ENCODE measurements at regions of chr13 and their contacts with region 1.

Region 1: DNA sequence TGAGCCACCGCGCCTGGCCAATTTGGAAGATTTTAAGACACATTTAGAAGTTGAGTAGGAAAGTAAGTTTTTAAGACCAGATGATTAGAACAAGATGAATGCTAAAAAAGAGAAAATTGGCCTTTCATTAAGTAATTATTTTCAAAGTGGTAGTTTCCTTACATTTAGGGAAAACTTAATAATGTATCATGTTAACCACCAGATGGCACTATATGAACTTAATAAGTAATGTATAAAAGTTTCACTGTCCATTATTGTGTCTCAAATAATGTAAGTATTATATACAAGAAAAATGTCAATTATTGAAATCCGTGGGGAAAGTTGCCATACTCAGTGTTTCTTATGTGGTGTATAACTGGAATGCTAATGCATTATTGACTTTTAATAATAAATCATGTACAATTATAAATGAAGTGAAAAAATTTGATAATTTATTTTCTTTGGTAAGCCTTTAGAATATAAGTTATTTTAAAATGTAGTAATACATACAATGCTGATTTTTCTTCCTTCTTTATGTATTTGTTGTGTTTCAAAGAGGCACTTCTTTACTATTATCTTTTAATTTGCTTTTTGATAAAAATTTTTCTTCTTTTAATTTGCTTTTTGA is 29.2 kb downstream of the COG6 start:
- DNase-seq: peak; percentile 65
- ATAC-seq: peak; percentile 54
- H3K4me3 ChIP-seq: no peak overlapping the region
- H3K27ac ChIP-seq: no peak overlapping the region
- H3K4me1 ChIP-seq: peaks cover 3% of the 10 kb centered on the region; the same call in 1 of the 2 replicates
- H3K27me3 ChIP-seq: no peaks in the 10 kb centered on the region
- CTCF ChIP-seq: peak; percentile 49
- POLR2A ChIP-seq: no peak
- RAD21 ChIP-seq: peak; percentile 50

Region 2: DNA sequence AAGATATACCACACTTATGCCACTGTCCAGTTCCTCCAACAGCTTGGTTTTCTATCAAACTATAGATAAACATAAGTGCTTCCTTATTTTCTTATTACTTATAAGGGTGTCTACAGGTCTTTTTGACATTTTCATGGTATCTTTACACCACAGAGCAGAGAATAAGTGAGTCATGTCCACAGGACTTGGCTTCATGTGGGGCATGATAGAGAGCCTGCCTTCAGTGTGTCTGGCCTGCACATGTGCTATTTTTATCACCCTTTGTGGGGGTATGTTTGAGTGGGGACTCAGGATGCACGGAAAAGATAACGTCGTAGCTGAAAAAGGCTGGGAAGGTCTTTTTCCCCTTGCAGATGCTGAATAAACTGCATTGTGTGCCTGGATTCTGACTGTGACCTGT is 685.9 kb before region 1 on chr13:
- CTCF ChIA-PET with region 1: no interaction called
- POLR2A ChIA-PET with region 1: no interaction called
- dilution Hi-C with region 1: no loop called
- in situ Hi-C with region 1: no loop called
- intact Hi-C with region 1: no loop called
- DNase-seq: no peak
- ATAC-seq: no peak
- H3K4me3 ChIP-seq: no peak overlapping the region
- H3K27ac ChIP-seq: no peak overlapping the region
- H3K4me1 ChIP-seq: no peaks in the 10 kb centered on the region
- H3K27me3 ChIP-seq: no peaks in the 10 kb centered on the region
- CTCF ChIP-seq: no peak
- POLR2A ChIP-seq: no peak
- RAD21 ChIP-seq: no peak

Region 3: DNA sequence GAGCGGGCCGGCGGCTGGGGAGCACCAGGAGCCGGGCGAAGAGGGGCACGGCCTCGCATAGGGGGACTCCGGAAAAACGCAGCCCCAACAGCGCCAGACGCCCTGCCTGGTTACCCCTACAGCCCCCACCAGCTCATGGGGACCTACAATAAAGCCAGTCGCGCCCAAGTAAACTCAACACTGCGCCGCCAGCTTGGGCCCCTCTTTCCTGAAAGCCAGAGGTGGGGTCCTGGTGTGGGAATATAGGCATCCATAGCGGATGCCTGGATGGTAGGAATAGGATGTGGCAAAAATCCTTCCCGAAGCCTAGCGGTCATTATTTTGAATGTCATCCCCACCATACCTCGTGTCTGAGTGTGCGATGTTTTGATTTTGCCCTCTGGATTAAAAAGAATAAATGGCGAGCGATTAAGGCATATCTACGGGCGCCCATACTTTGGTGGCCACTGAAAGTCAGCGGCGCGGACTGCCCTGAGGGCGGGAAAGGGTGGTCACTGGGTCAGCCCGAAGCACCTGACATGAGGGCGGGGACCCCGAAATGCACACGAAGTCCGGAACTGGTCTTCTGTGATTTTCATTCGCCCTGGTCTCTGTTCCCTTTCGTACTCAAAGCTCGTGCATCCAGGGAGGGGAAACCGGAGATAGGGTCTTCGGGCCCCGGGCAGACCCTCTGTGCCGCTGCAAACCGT is 646.6 kb before region 1 on chr13 and contains the starts of genes NHLRC3 and PROSER1:
- CTCF ChIA-PET with region 1: interaction called, 3 read pairs
- POLR2A ChIA-PET with region 1: no interaction called
- dilution Hi-C with region 1: no loop called
- in situ Hi-C with region 1: no loop called
- intact Hi-C with region 1: loop called (anchors 5 kb)
- DNase-seq: peak; percentile 88
- ATAC-seq: peak; percentile 92
- H3K4me3 ChIP-seq: peak within 1 kb of the TSS; percentile 85
- H3K27ac ChIP-seq: peak within 1 kb of the TSS; percentile 77
- H3K4me1 ChIP-seq: peaks cover 2% of the 10 kb centered on the region; the same call in 1 of the 2 replicates
- H3K27me3 ChIP-seq: no peaks in the 10 kb centered on the region
- CTCF ChIP-seq: no peak
- POLR2A ChIP-seq: peak; percentile 75; the same call in 1 of the 2 replicates
- RAD21 ChIP-seq: no peak
- total RNA-seq, gene NHLRC3: 3.0 and 5.6 TPM in 2 replicates
- total RNA-seq, gene PROSER1: 2.0 and 4.2 TPM in 2 replicates

Region 4: DNA sequence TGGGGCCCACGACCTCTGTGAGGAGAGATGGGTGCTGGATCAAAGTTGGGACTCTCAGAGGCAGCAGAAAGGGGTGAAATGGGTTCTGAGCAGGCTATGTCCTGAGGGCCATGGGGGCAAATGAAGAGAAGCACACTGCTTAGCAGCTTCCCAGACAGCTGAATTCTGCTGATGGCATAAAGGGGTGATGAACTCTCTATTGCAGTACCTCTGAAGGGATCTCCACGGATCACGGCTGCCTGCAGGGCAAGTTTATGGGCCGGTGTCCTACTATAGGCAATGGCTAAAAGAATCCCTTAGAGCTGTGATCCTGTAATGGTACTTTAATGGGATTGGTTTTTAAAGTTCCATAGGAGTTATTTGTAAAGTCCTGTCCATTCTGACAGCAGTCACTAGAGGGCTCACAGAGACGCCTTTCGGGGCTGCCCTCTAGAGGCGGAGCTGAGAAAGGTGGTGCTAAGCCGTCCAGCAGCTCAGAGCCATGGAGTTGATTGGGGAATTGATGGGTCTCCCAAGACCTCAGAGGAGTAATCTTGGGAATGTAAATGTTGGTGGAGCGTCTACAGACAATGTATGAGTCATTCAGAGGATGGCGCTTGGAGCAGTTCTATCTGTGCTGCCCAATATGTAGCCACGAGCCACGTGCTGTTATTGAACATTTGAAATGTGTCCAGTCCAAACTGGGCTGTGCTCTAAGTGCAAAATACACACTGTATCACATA is 258.1 kb after region 1 on chr13:
- CTCF ChIA-PET with region 1: interaction called, 5 read pairs
- POLR2A ChIA-PET with region 1: no interaction called
- dilution Hi-C with region 1: no loop called
- in situ Hi-C with region 1: no loop called
- intact Hi-C with region 1: loop called (anchors 2 kb)
- DNase-seq: peak; percentile 57
- ATAC-seq: peak; percentile 99
- H3K4me3 ChIP-seq: no peak overlapping the region
- H3K27ac ChIP-seq: no peak overlapping the region
- H3K4me1 ChIP-seq: no peaks in the 10 kb centered on the region
- H3K27me3 ChIP-seq: no peaks in the 10 kb centered on the region
- CTCF ChIP-seq: peak; percentile 99
- POLR2A ChIP-seq: no peak
- RAD21 ChIP-seq: peak; percentile 65

Region 5: DNA sequence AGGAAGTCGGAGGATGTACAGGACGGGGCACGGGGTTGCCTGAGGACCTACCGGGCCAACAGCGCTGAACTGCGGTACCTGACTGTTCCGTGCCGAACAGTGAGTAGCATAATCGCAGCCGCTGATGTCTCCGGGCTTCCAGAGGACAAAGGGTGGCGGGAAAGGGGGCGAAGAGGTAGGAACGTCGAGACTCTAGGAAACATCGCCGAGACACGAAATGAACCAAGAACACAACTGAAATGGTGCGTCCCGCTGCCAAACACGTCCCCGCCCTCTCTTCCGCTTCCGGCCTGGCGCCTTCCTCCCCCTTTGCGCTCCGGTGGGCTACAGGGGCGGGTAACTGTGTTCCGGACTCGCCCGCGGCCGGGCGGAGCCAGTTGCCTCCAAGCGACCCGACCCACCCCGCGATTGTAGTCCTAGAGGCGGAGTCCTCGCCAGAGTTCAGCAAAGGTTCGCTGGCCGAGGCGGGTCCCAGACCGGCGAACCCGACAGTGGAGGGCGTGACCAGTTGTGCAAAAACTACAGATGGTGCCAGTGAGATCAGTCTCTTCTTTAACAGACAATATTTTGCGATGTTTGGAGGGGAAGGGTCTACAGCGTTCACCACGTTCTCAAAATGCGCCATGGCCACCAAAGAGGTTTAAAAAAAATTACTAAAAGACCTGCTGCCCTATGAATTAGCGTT is 1086.4 kb after region 1 on chr13 and contains the start of gene MRPS31:
- CTCF ChIA-PET with region 1: no interaction called
- POLR2A ChIA-PET with region 1: no interaction called
- dilution Hi-C with region 1: no loop called
- in situ Hi-C with region 1: no loop called
- intact Hi-C with region 1: loop called (anchors 10 kb)
- DNase-seq: peak; percentile 91
- ATAC-seq: peak; percentile 100
- H3K4me3 ChIP-seq: peak within 1 kb of the TSS; percentile 94
- H3K27ac ChIP-seq: peak within 1 kb of the TSS; percentile 88
- H3K4me1 ChIP-seq: no peaks in the 10 kb centered on the region
- H3K27me3 ChIP-seq: no peaks in the 10 kb centered on the region
- CTCF ChIP-seq: no peak
- POLR2A ChIP-seq: peak; percentile 51; the same call in 1 of the 2 replicates
- RAD21 ChIP-seq: no peak
- total RNA-seq, gene MRPS31: 9.3 and 15.3 TPM in 2 replicates

Measured in IMR-90 (cell line).